Activated CD8-positive, alpha-beta T cell treated with anti-CD3 and anti-CD28 coated beads for 36 hours (primary cell): ENCODE measurements at regions of chrX and their contacts with region 1.

Region 1: GRCh38 chrX:40792433-40792832 is 57.1 kb upstream of the MED14 start:
- DNase-seq: no peak
- ATAC-seq: no peak
- H3K4me3 Mint-ChIP-seq: no peak overlapping the region
- H3K27ac Mint-ChIP-seq: no peak overlapping the region
- H3K4me1 Mint-ChIP-seq: no peaks in the 10 kb centered on the region
- H3K27me3 Mint-ChIP-seq: peaks cover 2% of the 10 kb centered on the region
- CTCF ChIP-seq: no peak

Region 2: DNA sequence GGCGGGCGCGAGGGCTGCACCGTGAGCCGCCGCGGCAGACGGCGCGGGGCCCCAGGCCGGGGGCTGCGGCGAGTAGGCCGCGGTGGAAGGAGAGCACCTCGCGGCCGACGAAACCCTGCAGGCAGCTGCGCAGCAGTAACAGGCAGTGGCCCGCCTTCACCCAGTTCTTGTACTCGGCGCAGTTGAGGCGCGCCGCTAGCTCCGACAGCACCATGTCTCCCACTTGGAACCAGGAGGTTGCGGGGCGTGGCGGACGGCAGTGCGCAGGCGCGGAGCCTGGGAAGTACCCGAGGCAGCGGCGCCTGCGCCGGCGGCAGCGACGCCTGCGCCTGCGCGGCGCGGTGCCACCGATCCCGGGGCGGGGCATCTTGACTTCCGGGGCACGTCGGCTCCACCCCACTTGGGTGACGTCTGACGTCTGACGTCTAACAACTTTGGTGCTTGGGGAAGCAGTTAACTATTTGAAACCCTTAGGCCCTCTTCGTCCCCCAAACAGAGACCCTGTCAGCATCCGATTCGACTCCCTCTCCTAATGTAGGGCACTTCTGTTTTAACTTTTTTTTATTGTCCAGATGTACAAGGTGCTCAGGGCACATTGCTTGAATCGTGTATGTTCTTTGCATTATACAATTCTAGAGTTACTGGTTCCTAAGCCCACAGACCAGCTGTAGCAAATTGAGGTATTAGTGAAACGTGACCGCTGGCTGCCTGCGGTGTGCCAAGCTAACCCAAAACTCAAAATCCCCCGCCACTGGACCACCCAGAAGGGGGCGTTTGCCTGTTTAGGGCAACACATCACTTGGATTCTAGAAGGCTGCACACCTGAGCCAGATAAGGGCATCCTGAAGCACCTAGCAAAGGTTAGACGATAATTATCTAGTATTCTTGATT is 144.9 kb before region 1 on chrX and contains the start of gene CXorf38:
- CTCF ChIA-PET with region 1: interaction called, 72 read pairs
- POLR2A ChIA-PET with region 1: no interaction called
- intact Hi-C with region 1: loop called (anchors 5 kb)
- DNase-seq: peak; percentile 93
- ATAC-seq: peak; percentile 80
- H3K4me3 Mint-ChIP-seq: peak within 1 kb of the TSS; percentile 98
- H3K27ac Mint-ChIP-seq: peak within 1 kb of the TSS; percentile 97
- H3K4me1 Mint-ChIP-seq: peaks cover 16% of the 10 kb centered on the region
- H3K27me3 Mint-ChIP-seq: no peaks in the 10 kb centered on the region
- CTCF ChIP-seq: no peak
- total RNA-seq, gene CXorf38: 21.2 to 22.5 TPM

Region 3: DNA sequence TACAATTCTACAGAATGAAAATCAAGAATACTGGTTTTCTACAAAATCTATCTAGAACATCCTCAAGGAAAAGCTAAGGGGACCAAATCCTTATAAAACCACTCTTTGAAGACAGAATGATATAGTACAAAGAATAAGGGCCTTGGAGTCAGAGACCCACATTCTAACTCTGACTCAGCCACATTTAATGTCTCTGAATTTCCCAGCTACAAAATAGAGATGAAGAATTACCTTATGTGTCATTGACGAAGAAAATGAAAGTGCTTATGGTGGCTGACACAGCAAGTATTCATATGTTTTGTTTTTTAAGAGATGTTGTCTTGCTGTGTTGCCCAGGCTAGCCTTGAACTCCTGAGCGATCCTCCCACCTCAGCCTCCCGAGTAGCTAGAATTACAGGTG is 109.2 kb before region 1 on chrX:
- CTCF ChIA-PET with region 1: interaction called, 12 read pairs
- POLR2A ChIA-PET with region 1: no interaction called
- intact Hi-C with region 1: no loop called
- DNase-seq: no peak
- ATAC-seq: no peak
- H3K4me3 Mint-ChIP-seq: no peak overlapping the region
- H3K27ac Mint-ChIP-seq: no peak overlapping the region
- H3K4me1 Mint-ChIP-seq: peaks cover 29% of the 10 kb centered on the region
- H3K27me3 Mint-ChIP-seq: no peaks in the 10 kb centered on the region
- CTCF ChIP-seq: no peak

Region 4: GRCh38 chrX:40780952-40781351 is 11.5 kb before region 1 on chrX:
- CTCF ChIA-PET with region 1: interaction called, 10 read pairs
- POLR2A ChIA-PET with region 1: no interaction called
- intact Hi-C with region 1: no loop called
- DNase-seq: no peak
- ATAC-seq: no peak
- H3K4me3 Mint-ChIP-seq: no peak overlapping the region
- H3K27ac Mint-ChIP-seq: no peak overlapping the region
- H3K4me1 Mint-ChIP-seq: peaks cover 10% of the 10 kb centered on the region
- H3K27me3 Mint-ChIP-seq: no peaks in the 10 kb centered on the region
- CTCF ChIP-seq: no peak